Activated CD4-positive, alpha-beta T cell treated with anti-CD3 and anti-CD28 coated beads for 36 hours (primary cell): ENCODE measurements at regions of chr15 and their contacts with region 1.

Region 1: DNA sequence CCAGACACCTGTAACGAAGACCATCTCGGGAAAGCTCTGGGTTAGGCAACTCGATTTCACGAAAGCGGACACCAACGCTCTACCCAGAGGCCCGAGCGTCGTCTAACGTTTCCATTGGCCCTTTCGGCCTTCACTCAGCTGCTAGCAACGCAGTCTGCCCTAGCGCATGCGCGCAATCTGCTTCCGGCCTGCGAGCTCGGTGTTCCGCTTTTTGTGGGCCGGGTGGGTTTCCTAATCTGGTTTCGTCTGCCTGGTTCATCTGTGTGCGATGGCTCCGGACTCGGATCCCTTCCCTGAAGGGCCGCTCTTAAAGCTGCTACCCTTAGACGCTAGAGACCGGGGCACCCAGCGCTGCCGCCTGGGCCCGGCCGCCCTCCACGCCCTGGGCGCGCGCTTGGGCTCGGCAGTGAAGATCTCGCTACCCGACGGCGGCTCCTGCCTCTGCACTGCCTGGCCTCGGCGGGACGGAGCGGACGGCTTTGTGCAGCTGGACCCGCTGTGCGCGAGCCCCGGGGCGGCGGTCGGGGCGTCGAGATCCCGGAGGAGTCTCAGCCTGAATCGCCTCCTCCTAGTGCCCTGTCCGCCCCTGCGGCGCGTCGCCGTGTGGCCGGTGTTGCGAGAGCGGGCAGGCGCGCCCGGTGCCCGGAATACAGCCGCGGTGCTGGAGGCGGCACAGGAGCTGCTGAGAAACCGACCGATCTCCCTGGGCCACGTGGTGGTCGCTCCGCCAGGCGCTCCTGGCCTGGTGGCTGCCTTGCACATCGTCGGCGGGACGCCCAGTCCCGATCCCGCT is 24.0 kb upstream of the GATM start:
- DNase-seq: peak; percentile 97
- ATAC-seq: peak; percentile 97
- H3K4me3 Mint-ChIP-seq: peak overlapping the region; percentile 98
- H3K27ac Mint-ChIP-seq: peak overlapping the region; percentile 98
- H3K4me1 Mint-ChIP-seq: peaks cover 32% of the 10 kb centered on the region
- H3K27me3 Mint-ChIP-seq: no peaks in the 10 kb centered on the region

Region 2: DNA sequence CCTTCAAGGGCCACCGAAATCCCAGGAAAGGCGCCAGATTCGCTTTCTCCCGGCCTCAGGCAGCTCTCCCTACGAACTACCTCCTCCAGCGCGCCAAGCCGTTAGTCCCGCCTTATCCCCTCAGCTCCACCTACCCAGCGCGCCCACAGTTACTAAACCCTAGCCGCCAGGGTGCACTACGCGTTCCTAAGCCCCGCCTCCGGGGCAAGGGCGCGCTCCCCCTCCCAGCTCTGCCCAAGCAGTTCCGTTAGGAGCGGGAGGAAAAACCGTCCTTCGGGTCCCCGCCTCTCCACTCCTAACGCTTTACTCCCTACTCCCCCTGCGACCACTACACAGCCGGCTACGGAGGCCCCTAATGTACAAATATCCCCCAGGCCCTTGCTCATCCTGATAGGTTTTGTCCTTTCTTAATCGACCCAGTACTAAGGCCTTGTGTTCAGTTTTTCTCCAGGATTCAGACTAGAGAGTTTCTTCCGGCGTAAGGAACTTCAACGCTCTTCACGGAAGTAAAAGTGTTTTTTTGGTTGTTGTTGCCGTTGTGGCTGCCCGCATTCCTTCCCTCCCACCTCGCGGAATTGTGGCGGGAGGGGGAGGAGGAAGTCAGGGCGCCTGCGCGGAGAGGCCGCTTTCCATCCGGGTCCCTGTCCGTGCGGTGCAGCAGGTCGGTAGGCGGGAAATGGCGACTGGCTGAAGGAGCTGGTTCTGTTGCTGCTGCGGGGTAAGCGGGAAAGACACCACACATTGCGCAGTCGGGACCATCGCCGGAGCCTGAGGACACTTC is 975.2 kb before region 1 on chr15 and contains the start of gene CTDSPL2:
- CTCF ChIA-PET with region 1: no interaction called
- POLR2A ChIA-PET with region 1: no interaction called
- intact Hi-C with region 1: loop called in 1 of 2 experiments (anchors 2 kb)
- DNase-seq: peak; percentile 97
- ATAC-seq: peak; percentile 98
- H3K4me3 Mint-ChIP-seq: peak within 1 kb of the TSS; percentile 98
- H3K27ac Mint-ChIP-seq: peak within 1 kb of the TSS; percentile 99
- H3K4me1 Mint-ChIP-seq: peaks cover 36% of the 10 kb centered on the region
- H3K27me3 Mint-ChIP-seq: no peaks in the 10 kb centered on the region
- total RNA-seq, gene CTDSPL2: 80.7 to 107 TPM

Region 3: DNA sequence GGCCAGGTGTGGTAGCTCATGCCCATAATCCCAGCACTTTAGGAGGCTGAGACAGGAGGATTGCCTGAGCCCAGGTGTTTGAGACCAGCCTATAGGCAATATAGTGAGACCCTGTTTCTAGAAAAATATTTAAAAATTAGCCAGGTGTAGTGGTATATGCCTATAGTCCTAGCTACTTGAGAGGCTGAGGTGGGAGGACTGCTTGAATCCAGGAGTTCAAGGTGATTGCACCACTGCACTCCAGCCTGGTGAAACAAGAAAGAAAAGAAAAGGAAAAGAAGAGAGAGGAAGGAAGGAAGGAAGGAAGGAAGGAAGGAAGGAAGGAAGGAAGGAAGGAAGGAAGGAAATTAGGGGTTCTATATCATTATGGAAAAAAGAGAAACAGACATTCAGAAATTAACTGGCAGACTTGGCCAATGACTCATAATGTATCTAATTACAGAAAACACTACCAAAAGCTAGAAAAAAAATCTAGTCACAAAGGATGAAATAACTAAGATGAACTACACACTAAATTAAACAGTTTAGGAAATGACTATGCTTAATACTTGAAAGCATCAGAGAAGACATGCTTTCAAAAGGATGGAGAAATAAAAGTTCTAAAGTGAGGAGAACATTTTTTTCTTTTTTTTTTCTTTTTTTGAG is 491.3 kb before region 1 on chr15:
- CTCF ChIA-PET with region 1: no interaction called
- POLR2A ChIA-PET with region 1: no interaction called
- intact Hi-C with region 1: no loop called
- DNase-seq: no peak
- ATAC-seq: peak; percentile 87
- H3K4me3 Mint-ChIP-seq: no peak overlapping the region
- H3K27ac Mint-ChIP-seq: no peak overlapping the region
- H3K4me1 Mint-ChIP-seq: peaks cover 6% of the 10 kb centered on the region
- H3K27me3 Mint-ChIP-seq: no peaks in the 10 kb centered on the region

Region 4: GRCh38 chr15:45022871-45023658 is 379.3 kb before region 1 on chr15 and contains the start of gene SORD:
- CTCF ChIA-PET with region 1: no interaction called
- POLR2A ChIA-PET with region 1: no interaction called
- intact Hi-C with region 1: loop called in 1 of 2 experiments (anchors 1 kb)
- DNase-seq: peak; percentile 96
- ATAC-seq: peak; percentile 99
- H3K4me3 Mint-ChIP-seq: peak within 1 kb of the TSS; percentile 83
- H3K27ac Mint-ChIP-seq: peak within 1 kb of the TSS; percentile 74
- H3K4me1 Mint-ChIP-seq: peaks cover 23% of the 10 kb centered on the region
- H3K27me3 Mint-ChIP-seq: peaks cover 16% of the 10 kb centered on the region
- total RNA-seq, gene SORD: 17.1 to 17.7 TPM

Region 5: DNA sequence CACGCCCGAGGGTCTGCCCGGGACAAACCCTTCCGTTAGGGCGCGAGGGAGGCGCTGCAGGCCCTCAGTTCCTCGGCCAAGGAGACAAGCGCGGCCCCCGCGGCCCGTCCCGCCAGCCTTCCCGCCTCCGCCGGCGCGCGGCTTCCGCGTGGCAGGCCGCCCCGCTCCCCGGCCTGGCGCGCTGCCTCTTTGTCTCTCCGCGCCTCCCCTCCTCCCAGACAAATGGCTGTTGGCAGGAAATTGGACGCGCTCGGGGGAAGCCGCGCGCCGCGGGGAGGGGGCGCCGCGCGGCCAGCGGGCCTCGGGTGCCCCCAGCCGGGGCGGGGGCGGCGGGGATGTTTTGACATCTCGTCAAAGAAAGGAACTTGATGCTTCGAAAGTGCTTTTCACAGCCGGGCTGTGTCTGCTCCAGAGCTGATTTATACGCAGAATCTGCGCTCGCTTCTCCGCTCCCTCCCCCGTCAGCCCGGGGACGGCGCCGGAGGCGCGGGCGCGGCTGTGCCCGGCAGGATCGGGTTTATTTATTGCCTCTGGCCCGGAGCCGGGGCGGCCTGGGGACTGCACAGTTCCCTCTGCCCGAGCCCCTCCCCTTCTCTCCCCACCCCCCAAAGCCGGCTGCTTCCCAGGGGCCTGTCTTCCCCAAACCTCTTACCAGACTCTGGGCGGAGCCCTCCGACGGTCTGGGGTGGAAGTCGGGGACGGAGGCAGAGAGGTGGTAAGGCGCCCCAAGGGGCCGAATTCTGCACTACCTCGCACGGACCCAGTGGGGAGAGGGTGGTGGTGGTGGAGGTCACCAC is 235.3 kb before region 1 on chr15:
- CTCF ChIA-PET with region 1: interaction called, 21 read pairs
- POLR2A ChIA-PET with region 1: interaction called, 4 read pairs
- intact Hi-C with region 1: loop called (anchors 1 to 2 kb)
- DNase-seq: peak; percentile 91
- ATAC-seq: peak; percentile 93
- H3K4me3 Mint-ChIP-seq: peak overlapping the region; percentile 69
- H3K27ac Mint-ChIP-seq: peak overlapping the region; percentile 77
- H3K4me1 Mint-ChIP-seq: peaks cover 9% of the 10 kb centered on the region
- H3K27me3 Mint-ChIP-seq: no peaks in the 10 kb centered on the region

Region 6: GRCh38 chr15:45205192-45205591 is 197.2 kb before region 1 on chr15:
- CTCF ChIA-PET with region 1: interaction called, 48 read pairs
- POLR2A ChIA-PET with region 1: interaction called, 11 read pairs
- intact Hi-C with region 1: loop called (anchors 1 kb)
- DNase-seq: peak; percentile 86
- ATAC-seq: peak; percentile 63
- H3K4me3 Mint-ChIP-seq: no peak overlapping the region
- H3K27ac Mint-ChIP-seq: no peak overlapping the region
- H3K4me1 Mint-ChIP-seq: peaks cover 7% of the 10 kb centered on the region
- H3K27me3 Mint-ChIP-seq: peaks cover 2% of the 10 kb centered on the region

Region 7: GRCh38 chr15:45378149-45378912 is 24.0 kb before region 1 on chr15 and contains the start of gene GATM:
- CTCF ChIA-PET with region 1: interaction called, 32 read pairs
- POLR2A ChIA-PET with region 1: interaction called, 6 read pairs
- intact Hi-C with region 1: loop called in 1 of 2 experiments (anchors 1 kb)
- DNase-seq: peak; percentile 75
- ATAC-seq: peak; percentile 88
- H3K4me3 Mint-ChIP-seq: peak within 1 kb of the TSS; percentile 66
- H3K27ac Mint-ChIP-seq: peak within 1 kb of the TSS; percentile 26
- H3K4me1 Mint-ChIP-seq: peaks cover 12% of the 10 kb centered on the region
- H3K27me3 Mint-ChIP-seq: peaks cover 29% of the 10 kb centered on the region
- total RNA-seq, gene GATM: 2.5 to 3.4 TPM

Region 8: GRCh38 chr15:45457641-45458433 is 55.5 kb after region 1 on chr15:
- CTCF ChIA-PET with region 1: interaction called, 32 read pairs
- POLR2A ChIA-PET with region 1: no interaction called
- intact Hi-C with region 1: loop called (anchors 1 to 2 kb)
- DNase-seq: peak; percentile 82
- ATAC-seq: peak; percentile 59
- H3K4me3 Mint-ChIP-seq: peak overlapping the region; percentile 73
- H3K27ac Mint-ChIP-seq: peak overlapping the region; percentile 80
- H3K4me1 Mint-ChIP-seq: peaks cover 44% of the 10 kb centered on the region
- H3K27me3 Mint-ChIP-seq: no peaks in the 10 kb centered on the region